Ovary (tissue), 10 donors: ENCODE measurements at regions of chr1 and their contacts with region 1.

Region 1: GRCh38 chr1:10378081-10378841 is 20.6 kb upstream of the PGD start:
- DNase-seq: peak; percentile 88 to 95 (median 92)
- H3K4me3 ChIP-seq: no peak overlapping the region
- H3K27ac ChIP-seq: peak overlapping the region in 1 of 2 donors; percentile 89
- H3K4me1 ChIP-seq: no peaks in the 10 kb centered on the region
- H3K27me3 ChIP-seq: no peaks in the 10 kb centered on the region
- CTCF ChIP-seq: no peak
- EP300 ChIP-seq: no peak
- POLR2A ChIP-seq: no peak

Region 2: GRCh38 chr1:10101929-10102328 is 276.3 kb before region 1 on chr1:
- intact Hi-C with region 1: no loop called
- DNase-seq: no peak
- H3K4me3 ChIP-seq: no peak overlapping the region
- H3K27ac ChIP-seq: no peak overlapping the region
- H3K4me1 ChIP-seq: no peaks in the 10 kb centered on the region
- H3K27me3 ChIP-seq: no peaks in the 10 kb centered on the region
- CTCF ChIP-seq: no peak
- EP300 ChIP-seq: no peak
- POLR2A ChIP-seq: no peak

Region 3: GRCh38 chr1:10430216-10431069 is 52.2 kb after region 1 on chr1 and contains the start of gene CENPS:
- intact Hi-C with region 1: loop called (anchors 2 to 5 kb)
- DNase-seq: peak; percentile 94 to 97 (median 94)
- H3K4me3 ChIP-seq: peak within 1 kb of the TSS; percentile 78
- H3K27ac ChIP-seq: peak within 1 kb of the TSS in 1 of 2 donors; percentile 19
- H3K4me1 ChIP-seq: no peaks in the 10 kb centered on the region
- H3K27me3 ChIP-seq: no peaks in the 10 kb centered on the region
- CTCF ChIP-seq: peak; percentile 97 to 99 (median 99)
- EP300 ChIP-seq: no peak
- POLR2A ChIP-seq: no peak
- total RNA-seq, gene CENPS: 1.5 to 13.6 (median 9.8) TPM

Region 4: GRCh38 chr1:10494754-10495474 is 116.7 kb after region 1 on chr1:
- intact Hi-C with region 1: no loop called
- DNase-seq: peak; percentile 43 to 81 (median 69)
- H3K4me3 ChIP-seq: no peak overlapping the region
- H3K27ac ChIP-seq: no peak overlapping the region
- H3K4me1 ChIP-seq: peaks cover 2% of the 10 kb centered on the region
- H3K27me3 ChIP-seq: no peaks in the 10 kb centered on the region
- CTCF ChIP-seq: peak; percentile 69 to 80 (median 79)
- EP300 ChIP-seq: no peak
- POLR2A ChIP-seq: no peak

Region 5: GRCh38 chr1:11805447-11806306 is 1427.4 kb after region 1 on chr1 and contains the starts of genes CLCN6 and MTHFR:
- intact Hi-C with region 1: no loop called
- DNase-seq: peak; percentile 100
- H3K4me3 ChIP-seq: peak within 1 kb of the TSS; percentile 80
- H3K27ac ChIP-seq: peak within 1 kb of the TSS; percentile 95 to 96
- H3K4me1 ChIP-seq: peaks cover 4% of the 10 kb centered on the region
- H3K27me3 ChIP-seq: no peaks in the 10 kb centered on the region
- CTCF ChIP-seq: peak in 1 of 3 donors; percentile 11
- EP300 ChIP-seq: peak; percentile 90
- POLR2A ChIP-seq: peak; percentile 98
- total RNA-seq, gene CLCN6: 11.7 to 39.7 (median 32.1) TPM
- total RNA-seq, gene MTHFR: 41.2 to 161 (median 56.7) TPM

Region 6: DNA sequence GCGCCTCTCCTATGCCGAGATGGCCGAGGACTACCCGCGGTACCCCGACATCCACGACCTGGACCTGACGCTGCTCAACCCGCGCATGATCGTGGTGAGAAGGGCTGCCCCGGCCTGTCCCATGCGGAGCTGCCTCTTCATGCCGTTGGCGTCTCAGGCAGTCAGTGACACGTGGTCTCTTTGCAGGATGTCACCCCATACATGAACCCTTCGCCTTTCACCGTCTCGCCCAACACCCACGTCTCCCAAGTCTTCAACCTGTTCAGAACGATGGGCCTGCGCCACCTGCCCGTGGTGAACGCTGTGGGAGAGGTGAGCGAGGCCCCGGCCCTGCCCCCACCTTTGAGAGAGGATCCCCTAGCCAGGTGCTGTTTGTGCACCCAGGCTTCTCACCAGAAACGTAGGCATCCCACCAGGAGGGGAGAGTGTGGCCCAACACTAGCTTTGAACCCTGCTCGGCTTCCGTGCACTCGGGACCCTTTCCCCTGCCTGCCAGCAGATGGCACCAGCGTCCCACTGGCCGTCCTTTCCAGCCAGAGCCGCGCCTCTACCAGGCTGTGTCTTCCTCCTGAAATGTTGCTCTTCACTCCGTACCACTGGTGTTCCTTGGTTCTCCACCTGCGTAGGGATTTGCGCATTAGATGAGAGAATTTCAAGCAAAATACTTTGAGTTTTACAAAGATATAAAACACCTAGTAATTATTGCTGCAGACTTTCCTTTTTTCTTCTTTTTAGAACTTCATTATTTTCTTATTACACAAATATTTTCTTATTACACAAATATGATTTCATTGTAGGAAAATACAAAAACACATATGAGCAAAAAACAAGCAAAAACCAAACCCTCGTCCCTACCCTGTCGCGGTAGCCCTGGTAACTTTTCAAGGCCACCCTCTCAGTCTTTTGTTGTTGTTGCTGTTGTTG is 1460.3 kb after region 1 on chr1:
- intact Hi-C with region 1: no loop called
- DNase-seq: peak; percentile 66 to 84 (median 78)
- H3K4me3 ChIP-seq: no peak overlapping the region
- H3K27ac ChIP-seq: no peak overlapping the region
- H3K4me1 ChIP-seq: peaks cover 6% of the 10 kb centered on the region
- H3K27me3 ChIP-seq: no peaks in the 10 kb centered on the region
- CTCF ChIP-seq: peak; percentile 85 to 87 (median 85)
- EP300 ChIP-seq: no peak
- POLR2A ChIP-seq: no peak